ENCODE measurements at regions of chr4 and their contacts with region 1.

Region 1: DNA sequence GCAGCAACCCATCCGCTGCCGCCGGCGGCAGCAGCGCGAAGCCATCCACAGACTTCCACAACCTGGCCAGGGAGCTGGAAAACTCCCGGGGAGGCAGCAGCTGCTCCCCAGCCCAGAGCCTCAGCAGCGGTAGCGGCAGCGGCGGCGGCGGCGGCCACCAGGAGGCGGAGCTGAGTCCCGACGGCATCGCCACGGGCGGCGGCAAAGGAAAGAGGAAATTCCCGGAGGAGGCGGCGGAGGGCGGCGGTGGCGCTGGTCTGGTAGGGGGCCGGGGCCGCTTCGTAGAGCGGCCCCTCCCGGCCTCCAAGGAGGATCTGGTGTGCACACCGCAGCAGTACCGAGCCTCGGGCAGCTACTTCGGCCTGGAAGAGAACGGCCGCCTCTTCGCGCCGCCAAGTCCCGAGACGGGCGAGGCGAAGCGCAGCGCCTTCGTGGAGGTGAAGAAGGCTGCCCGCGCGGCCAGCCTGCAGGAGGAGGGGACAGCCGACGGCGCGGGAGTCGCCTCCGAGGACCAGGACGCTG is 4.9 kb downstream of the PRDM8 start:
- DNase-seq: peak; percentile 90
- ATAC-seq: peak; percentile 60
- H3K4me3 ChIP-seq: peak overlapping the region; percentile 41 to 82 (median 77)
- H3K4me3 Mint-ChIP-seq: peak overlapping the region; percentile 89
- H3K27ac ChIP-seq: peak overlapping the region; percentile 53 to 82
- H3K27ac Mint-ChIP-seq: peak overlapping the region; percentile 91
- H3K4me1 ChIP-seq: peaks cover 17 to 24% of the 10 kb centered on the region in 2 donors
- H3K4me1 Mint-ChIP-seq: peaks cover 24% of the 10 kb centered on the region
- H3K27me3 ChIP-seq: peaks cover 0 to 21% (median under 1%) of the 10 kb centered on the region in 4 experiments
- H3K27me3 Mint-ChIP-seq: peaks cover 8% of the 10 kb centered on the region
- CTCF ChIP-seq: peak; percentile 86

Region 2: GRCh38 chr4:78938868-78939666 is 1263.2 kb before region 1 on chr4 and contains the start of gene PAQR3:
- CTCF ChIA-PET with region 1: interaction called, 3 read pairs
- POLR2A ChIA-PET with region 1: no interaction called
- intact Hi-C with region 1: loop called (anchors 2 kb)
- DNase-seq: peak; percentile 91
- ATAC-seq: peak; percentile 98
- H3K4me3 ChIP-seq: peak within 1 kb of the TSS; percentile 74 to 88 (median 85)
- H3K4me3 Mint-ChIP-seq: peak within 1 kb of the TSS; percentile 91
- H3K27ac ChIP-seq: peak within 1 kb of the TSS; percentile 45 to 75
- H3K27ac Mint-ChIP-seq: peak within 1 kb of the TSS; percentile 79
- H3K4me1 ChIP-seq: peaks cover 12 to 20% of the 10 kb centered on the region in 2 donors
- H3K4me1 Mint-ChIP-seq: peaks cover 26% of the 10 kb centered on the region
- H3K27me3 ChIP-seq: no peaks in the 10 kb centered on the region
- H3K27me3 Mint-ChIP-seq: peaks cover 3% of the 10 kb centered on the region
- CTCF ChIP-seq: no peak
- total RNA-seq, gene PAQR3: 12.6 and 13.5 TPM in 2 replicates

Region 3: DNA sequence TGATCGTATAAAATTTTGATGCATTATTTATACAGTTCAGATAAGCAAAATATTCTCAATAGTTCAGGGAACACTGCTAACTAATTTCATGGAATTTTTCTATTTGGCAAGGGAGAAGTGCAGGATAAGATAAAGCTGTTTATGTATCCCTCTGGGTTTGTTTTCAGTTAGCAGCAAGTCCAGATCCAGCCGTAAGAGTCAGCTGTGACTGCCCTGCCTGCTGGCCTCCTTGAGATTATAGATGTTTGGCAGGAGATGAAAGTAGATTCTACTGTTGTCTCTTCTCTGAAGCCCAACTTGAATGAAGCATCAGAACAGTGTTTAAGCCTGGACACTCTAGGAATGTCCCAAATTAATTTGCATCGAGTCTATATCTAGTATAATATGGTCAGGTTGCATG is 158.7 kb before region 1 on chr4:
- CTCF ChIA-PET with region 1: no interaction called
- POLR2A ChIA-PET with region 1: no interaction called
- intact Hi-C with region 1: no loop called
- DNase-seq: no peak
- ATAC-seq: no peak
- H3K4me3 ChIP-seq: no peak overlapping the region
- H3K4me3 Mint-ChIP-seq: no peak overlapping the region
- H3K27ac ChIP-seq: no peak overlapping the region
- H3K27ac Mint-ChIP-seq: no peak overlapping the region
- H3K4me1 ChIP-seq: no peaks in the 10 kb centered on the region
- H3K4me1 Mint-ChIP-seq: no peaks in the 10 kb centered on the region
- H3K27me3 ChIP-seq: no peaks in the 10 kb centered on the region
- H3K27me3 Mint-ChIP-seq: no peaks in the 10 kb centered on the region
- CTCF ChIP-seq: no peak

Region 4: DNA sequence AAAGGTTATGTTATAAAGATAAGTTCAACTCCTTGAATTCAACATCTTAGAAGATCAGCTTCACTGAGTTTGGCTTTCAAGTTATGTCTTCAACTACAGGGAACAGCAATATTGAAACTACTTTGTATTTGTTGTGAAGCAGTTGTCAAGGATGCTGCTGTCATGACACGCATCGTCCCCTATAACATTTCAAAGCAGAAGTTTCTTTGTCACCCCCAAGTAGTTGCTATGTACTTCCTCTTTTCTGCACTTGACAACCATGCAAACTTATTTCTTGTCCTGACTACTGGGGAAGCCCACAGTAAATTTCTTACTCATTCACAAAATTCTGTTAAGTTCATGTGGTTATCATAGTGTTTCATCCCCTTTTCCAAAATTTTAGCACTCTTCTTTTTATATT is 143.5 kb before region 1 on chr4:
- CTCF ChIA-PET with region 1: interaction called, 5 read pairs
- POLR2A ChIA-PET with region 1: no interaction called
- intact Hi-C with region 1: loop called (anchors 2 kb)
- DNase-seq: peak; percentile 94
- ATAC-seq: peak; percentile 93
- H3K4me3 ChIP-seq: peak overlapping the region in 2 of 5 experiments; percentile 10 to 33
- H3K4me3 Mint-ChIP-seq: peak overlapping the region; percentile 79
- H3K27ac ChIP-seq: peak overlapping the region; percentile 91 to 100
- H3K27ac Mint-ChIP-seq: peak overlapping the region; percentile 98
- H3K4me1 ChIP-seq: peaks cover 14 to 17% of the 10 kb centered on the region in 2 donors
- H3K4me1 Mint-ChIP-seq: peaks cover 36% of the 10 kb centered on the region
- H3K27me3 ChIP-seq: no peaks in the 10 kb centered on the region
- H3K27me3 Mint-ChIP-seq: no peaks in the 10 kb centered on the region
- CTCF ChIP-seq: no peak

Region 5: DNA sequence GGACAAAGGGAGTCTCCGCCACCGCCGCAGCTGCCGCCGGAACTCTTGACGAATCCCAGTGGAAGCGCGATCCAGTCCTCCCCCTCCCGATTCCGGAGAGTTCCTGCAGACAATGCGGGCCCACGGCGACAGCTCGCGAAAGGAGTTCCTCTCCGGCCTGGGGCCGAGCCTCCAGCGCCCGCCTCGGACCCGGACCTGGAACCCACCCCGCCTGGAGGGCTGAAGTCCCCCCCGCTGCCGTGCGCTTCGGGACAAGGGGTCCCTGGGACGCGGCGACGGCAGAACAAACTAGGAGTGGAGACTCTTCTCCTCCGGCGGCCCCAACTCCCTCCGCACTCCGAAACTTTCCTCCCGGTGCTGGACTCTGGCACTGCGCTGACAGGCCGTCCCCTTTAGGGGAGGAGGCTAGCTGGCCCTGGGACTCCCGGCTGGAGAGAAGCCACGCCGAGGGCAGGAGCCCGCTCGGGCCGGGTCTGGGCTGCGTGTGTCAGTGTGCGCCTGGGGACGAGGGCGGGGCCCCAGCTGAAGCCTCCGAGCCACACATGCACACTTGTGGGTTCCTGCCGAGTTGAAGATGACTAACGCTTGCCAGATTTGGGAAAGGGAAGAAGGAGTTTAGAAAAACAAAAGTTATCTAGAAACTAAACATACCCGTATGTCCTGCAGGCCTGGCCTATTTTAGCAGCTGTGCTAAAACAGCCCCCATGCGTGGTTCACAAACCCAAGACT is 129.3 kb before region 1 on chr4 and contains the start of gene ANTXR2:
- CTCF ChIA-PET with region 1: interaction called, 16 read pairs
- POLR2A ChIA-PET with region 1: interaction called, 10 read pairs
- intact Hi-C with region 1: loop called (anchors 2 kb)
- DNase-seq: peak; percentile 88
- ATAC-seq: peak; percentile 73
- H3K4me3 ChIP-seq: peak within 1 kb of the TSS; percentile 87 to 96 (median 88)
- H3K4me3 Mint-ChIP-seq: peak within 1 kb of the TSS; percentile 99
- H3K27ac ChIP-seq: peak within 1 kb of the TSS; percentile 91 to 97
- H3K27ac Mint-ChIP-seq: peak within 1 kb of the TSS; percentile 99
- H3K4me1 ChIP-seq: peaks cover 27% of the 10 kb centered on the region in 2 donors
- H3K4me1 Mint-ChIP-seq: peaks cover 52% of the 10 kb centered on the region
- H3K27me3 ChIP-seq: no peaks in the 10 kb centered on the region
- H3K27me3 Mint-ChIP-seq: no peaks in the 10 kb centered on the region
- CTCF ChIP-seq: no peak
- total RNA-seq, gene ANTXR2: 63.0 and 68.8 TPM in 2 replicates

Region 6: GRCh38 chr4:80173401-80173800 is 28.9 kb before region 1 on chr4:
- CTCF ChIA-PET with region 1: interaction called, 28 read pairs
- POLR2A ChIA-PET with region 1: interaction called, 5 read pairs
- intact Hi-C with region 1: no loop called
- DNase-seq: peak; percentile 82
- ATAC-seq: peak; percentile 93
- H3K4me3 ChIP-seq: peak overlapping the region in 1 of 5 experiments; percentile 47
- H3K4me3 Mint-ChIP-seq: peak overlapping the region; percentile 87
- H3K27ac ChIP-seq: peak overlapping the region; percentile 80 to 84
- H3K27ac Mint-ChIP-seq: peak overlapping the region; percentile 98
- H3K4me1 ChIP-seq: peaks cover 41 to 42% of the 10 kb centered on the region in 2 donors
- H3K4me1 Mint-ChIP-seq: peaks cover 60% of the 10 kb centered on the region
- H3K27me3 ChIP-seq: no peaks in the 10 kb centered on the region
- H3K27me3 Mint-ChIP-seq: no peaks in the 10 kb centered on the region
- CTCF ChIP-seq: no peak

Region 7: DNA sequence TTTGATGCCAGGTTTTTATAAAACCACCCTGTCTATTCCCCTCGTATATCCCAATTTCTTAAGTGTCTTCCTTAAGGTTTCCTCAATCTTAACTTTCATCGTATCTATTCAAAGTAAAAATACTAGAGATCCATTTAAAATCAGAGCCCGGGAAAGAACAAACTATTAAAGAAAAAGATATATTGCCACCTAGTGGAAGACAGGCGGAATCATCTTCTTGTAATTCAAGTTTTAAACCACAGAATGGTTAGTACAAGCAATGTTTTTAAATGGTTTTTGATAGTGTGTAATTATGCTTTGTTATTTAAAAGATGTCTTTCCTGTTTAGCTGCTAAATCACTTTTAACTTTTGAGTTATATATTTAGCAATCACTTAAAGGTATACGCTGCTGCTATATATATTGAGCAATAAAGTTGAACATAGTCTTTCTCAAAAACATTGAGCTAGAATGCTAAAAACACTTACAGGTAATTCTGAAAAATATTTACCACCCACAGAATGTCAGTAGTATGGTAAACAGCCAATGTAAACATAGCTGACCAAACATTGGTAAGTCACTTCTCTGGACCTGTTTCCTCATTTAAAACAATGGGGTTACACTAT is 13.3 kb after region 1 on chr4:
- CTCF ChIA-PET with region 1: interaction called, 26 read pairs
- POLR2A ChIA-PET with region 1: interaction called, 3 read pairs
- intact Hi-C with region 1: loop called (anchors 1 kb)
- DNase-seq: peak; percentile 54
- ATAC-seq: peak; percentile 33
- H3K4me3 ChIP-seq: no peak overlapping the region
- H3K4me3 Mint-ChIP-seq: no peak overlapping the region
- H3K27ac ChIP-seq: no peak overlapping the region
- H3K27ac Mint-ChIP-seq: no peak overlapping the region
- H3K4me1 ChIP-seq: no peaks in the 10 kb centered on the region
- H3K4me1 Mint-ChIP-seq: peaks cover 1% of the 10 kb centered on the region
- H3K27me3 ChIP-seq: peaks cover 0 to 9% (median 3%) of the 10 kb centered on the region in 4 experiments
- H3K27me3 Mint-ChIP-seq: peaks cover 20% of the 10 kb centered on the region
- CTCF ChIP-seq: peak; percentile 84

Measured in B cell (primary cell).